ENCODE measurements at regions of chr9 and their contacts with region 1.

Region 1: GRCh38 chr9:14018081-14018480 is 295.9 kb downstream of the NFIB start:
- DNase-seq: no peak
- H3K4me3 ChIP-seq: no peak overlapping the region
- H3K27me3 ChIP-seq: no peaks in the 10 kb centered on the region
- CTCF ChIP-seq: no peak

Region 2: GRCh38 chr9:13778631-13779030 is 239.4 kb before region 1 on chr9:
- CTCF ChIA-PET with region 1: no interaction called
- POLR2A ChIA-PET with region 1: interaction called, 11 read pairs
- DNase-seq: no peak
- H3K4me3 ChIP-seq: no peak overlapping the region
- H3K27me3 ChIP-seq: no peaks in the 10 kb centered on the region
- CTCF ChIP-seq: no peak

Region 3: GRCh38 chr9:14030375-14031059 is 12.4 kb after region 1 on chr9:
- CTCF ChIA-PET with region 1: no interaction called
- POLR2A ChIA-PET with region 1: no interaction called
- DNase-seq: no peak
- H3K4me3 ChIP-seq: peak overlapping the region; percentile 2; the same call in 1 of the 2 replicates
- H3K27me3 ChIP-seq: no peaks in the 10 kb centered on the region
- CTCF ChIP-seq: no peak